ENCODE measurements at regions of chr10 and their contacts with region 1.

Region 1: DNA sequence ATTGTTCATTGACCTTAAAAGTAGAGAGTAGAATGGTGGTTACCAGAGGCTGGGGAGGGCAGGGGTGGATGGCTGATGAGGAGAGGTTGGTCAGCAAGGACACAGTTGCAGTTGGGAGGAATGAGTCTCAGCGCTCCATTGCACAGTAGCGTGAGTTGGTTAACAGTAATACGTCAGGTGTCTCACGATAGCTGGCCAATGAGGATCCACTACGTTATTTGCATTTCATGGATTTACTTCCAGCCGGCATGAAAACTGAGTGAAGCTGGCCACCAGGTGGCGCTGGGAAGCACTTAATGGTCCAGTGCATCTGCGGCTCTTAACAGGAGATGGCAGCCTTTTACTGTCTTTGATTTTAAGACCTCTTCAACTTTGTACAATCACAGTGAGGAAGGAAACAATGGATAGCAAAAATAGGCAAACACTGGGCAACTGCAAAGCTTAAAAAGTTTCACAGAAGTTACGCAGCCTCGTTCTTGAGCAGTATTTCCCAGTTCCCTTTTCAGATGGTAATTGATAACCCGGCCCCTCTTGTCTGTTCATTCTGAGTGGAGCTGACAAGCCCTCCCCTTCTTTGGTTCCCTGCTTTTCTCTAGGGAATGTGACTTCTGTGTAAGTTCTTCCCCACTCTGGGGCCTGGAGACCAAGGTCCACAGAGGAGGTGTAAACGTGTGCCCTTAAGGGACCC is 23.7 kb downstream of the AKR1E2 start:
- H3K4me3 Mint-ChIP-seq: peak overlapping the region; percentile 2
- H3K27ac Mint-ChIP-seq: no peak overlapping the region
- H3K4me1 Mint-ChIP-seq: peaks cover 30% of the 10 kb centered on the region
- H3K27me3 Mint-ChIP-seq: no peaks in the 10 kb centered on the region

Region 2: GRCh38 chr10:4790922-4791321 is 58.8 kb before region 1 on chr10:
- intact Hi-C with region 1: no loop called
- H3K4me3 Mint-ChIP-seq: no peak overlapping the region
- H3K27ac Mint-ChIP-seq: no peak overlapping the region
- H3K4me1 Mint-ChIP-seq: no peaks in the 10 kb centered on the region
- H3K27me3 Mint-ChIP-seq: no peaks in the 10 kb centered on the region

Region 3: GRCh38 chr10:4819707-4820106 is 30.0 kb before region 1 on chr10:
- intact Hi-C with region 1: loop called (anchors 2 kb)
- H3K4me3 Mint-ChIP-seq: no peak overlapping the region
- H3K27ac Mint-ChIP-seq: peak overlapping the region; percentile 70
- H3K4me1 Mint-ChIP-seq: peaks cover 39% of the 10 kb centered on the region
- H3K27me3 Mint-ChIP-seq: peaks cover 11% of the 10 kb centered on the region

Region 4: GRCh38 chr10:5283305-5284158 is 433.8 kb after region 1 on chr10:
- intact Hi-C with region 1: loop called (anchors 2 kb)
- H3K4me3 Mint-ChIP-seq: no peak overlapping the region
- H3K27ac Mint-ChIP-seq: peak overlapping the region; percentile 86
- H3K4me1 Mint-ChIP-seq: peaks cover 51% of the 10 kb centered on the region
- H3K27me3 Mint-ChIP-seq: peaks cover 3% of the 10 kb centered on the region

Region 5: DNA sequence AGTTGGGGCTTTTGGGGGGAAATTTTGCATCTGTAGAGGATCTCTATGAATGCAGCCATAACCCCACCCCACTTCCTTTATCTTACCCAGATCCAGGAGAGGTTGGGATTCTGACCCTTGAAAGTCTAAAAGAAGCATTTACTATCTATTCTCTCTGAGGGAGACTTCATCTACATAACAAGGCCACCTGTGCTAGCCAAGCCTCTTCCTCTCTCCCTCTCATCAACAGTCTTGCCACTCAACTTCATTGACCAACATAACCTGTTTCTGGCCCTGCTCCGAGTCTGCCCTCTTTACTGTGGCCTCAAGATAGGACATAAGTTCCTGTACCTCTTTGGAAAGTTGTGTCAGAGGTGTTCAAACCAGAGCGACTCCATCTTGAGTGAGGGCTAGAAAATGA is 535.5 kb after region 1 on chr10:
- intact Hi-C with region 1: loop called (anchors 1 kb)
- H3K4me3 Mint-ChIP-seq: no peak overlapping the region
- H3K27ac Mint-ChIP-seq: no peak overlapping the region
- H3K4me1 Mint-ChIP-seq: no peaks in the 10 kb centered on the region
- H3K27me3 Mint-ChIP-seq: no peaks in the 10 kb centered on the region

Region 6: GRCh38 chr10:5434017-5434753 is 584.5 kb after region 1 on chr10:
- intact Hi-C with region 1: loop called (anchors 1 kb)
- H3K4me3 Mint-ChIP-seq: no peak overlapping the region
- H3K27ac Mint-ChIP-seq: no peak overlapping the region
- H3K4me1 Mint-ChIP-seq: peaks cover 7% of the 10 kb centered on the region
- H3K27me3 Mint-ChIP-seq: no peaks in the 10 kb centered on the region

Region 7: DNA sequence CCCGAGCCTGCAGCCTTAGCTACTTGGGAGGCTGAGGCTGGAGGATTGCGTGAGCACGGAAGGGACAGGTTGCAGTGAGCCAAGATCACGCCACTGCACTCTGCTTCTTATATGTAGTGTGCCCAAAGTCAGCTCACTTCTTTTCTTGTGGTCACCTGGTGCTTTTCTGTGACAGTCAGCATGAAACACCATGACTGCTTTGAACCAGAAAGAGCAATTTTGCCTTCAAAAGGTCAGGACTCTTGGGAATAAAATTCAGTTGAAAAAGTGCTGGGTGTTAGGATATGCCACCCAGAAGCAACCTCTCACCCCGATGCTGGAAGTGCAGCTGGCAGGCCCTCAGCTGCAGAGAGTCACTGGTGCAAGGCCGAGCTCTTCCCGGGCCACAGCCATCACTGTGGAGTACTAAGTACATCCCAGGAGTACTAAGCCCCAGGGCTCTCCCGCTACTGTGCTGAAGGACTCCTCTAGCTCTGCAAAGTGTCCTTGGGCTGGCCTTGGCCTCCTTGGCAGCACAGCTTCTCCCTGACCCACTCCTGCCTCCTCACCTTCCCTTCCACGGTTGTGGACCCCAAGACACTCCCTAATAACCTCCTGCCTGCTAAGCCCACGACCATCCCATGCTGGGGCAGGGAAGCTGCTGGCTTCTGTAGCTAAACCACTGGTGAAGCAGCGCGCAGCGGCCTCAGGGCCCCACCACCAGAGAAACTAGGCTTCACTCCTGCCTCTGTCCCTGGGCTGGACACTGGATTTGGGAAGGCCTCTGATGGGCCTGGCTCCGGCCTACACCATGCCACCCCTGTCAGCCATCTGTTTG is 981.1 kb after region 1 on chr10:
- intact Hi-C with region 1: no loop called
- H3K4me3 Mint-ChIP-seq: no peak overlapping the region
- H3K27ac Mint-ChIP-seq: no peak overlapping the region
- H3K4me1 Mint-ChIP-seq: no peaks in the 10 kb centered on the region
- H3K27me3 Mint-ChIP-seq: peaks cover 2% of the 10 kb centered on the region

Measured in dendritic cell treated with granulocyte-macrophage colony-stimulating factor and Interleukin-4, amounts not matched to agents 40 ng/mL and 50 ng/mL, for 4 days (primary cell).